GM12878 (cell line): ENCODE measurements at regions of chr14 and their contacts with region 1.

Region 1: DNA sequence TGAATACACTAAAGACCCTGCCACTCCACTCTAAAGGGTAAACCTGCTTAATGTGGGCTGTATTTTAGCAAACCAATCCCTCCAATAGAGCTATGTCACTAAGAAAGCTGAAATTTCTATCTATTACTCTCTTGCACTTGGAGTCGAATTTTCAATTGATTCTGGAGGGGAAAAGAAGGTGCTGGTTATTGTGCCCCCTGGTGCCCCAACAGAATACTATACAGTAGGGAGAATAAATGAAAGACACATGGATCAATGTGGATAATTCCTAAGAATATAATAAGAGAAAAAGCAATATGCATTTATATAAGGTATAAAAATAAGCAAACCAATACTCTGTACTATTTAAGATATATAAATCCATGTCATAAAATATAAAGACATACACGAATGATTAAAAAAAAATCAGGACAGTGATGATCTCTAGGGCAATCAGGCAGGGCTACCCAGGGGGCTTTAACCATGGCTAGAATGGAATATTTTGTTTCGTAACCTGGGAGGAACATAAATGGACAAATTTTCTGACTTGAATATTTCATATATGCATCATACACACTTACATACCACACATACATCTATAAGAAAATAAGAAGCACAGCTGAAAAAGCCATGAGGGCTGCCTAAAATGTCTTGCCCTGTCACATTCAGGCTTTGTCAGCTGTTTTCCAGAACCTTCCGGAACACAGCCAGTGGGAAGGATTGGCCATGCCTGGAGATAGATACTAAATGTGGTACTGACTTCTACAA is 54.4 kb downstream of the EFCAB11 start:
- DNase-seq: no peak
- ATAC-seq: peak; percentile 63
- H3K4me3 ChIP-seq: no peak overlapping the region
- H3K27ac ChIP-seq: no peak overlapping the region
- H3K4me1 ChIP-seq: no peaks in the 10 kb centered on the region
- H3K27me3 ChIP-seq: no peaks in the 10 kb centered on the region
- CTCF ChIP-seq: peak; percentile 44 to 56 (median 45); a peak in 5 of 6 replicates
- EP300 ChIP-seq: no peak
- POLR2A ChIP-seq: no peak
- RAD21 ChIP-seq: peak; percentile 77

Region 2: GRCh38 chr14:89773644-89774316 is 126.3 kb before region 1 on chr14:
- CTCF ChIA-PET with region 1: interaction called, 3 read pairs
- POLR2A ChIA-PET with region 1: no interaction called
- RAD21 ChIA-PET with region 1: no interaction called
- SMC1A ChIA-PET with region 1: interaction called, 3 read pairs
- in situ Hi-C with region 1: no loop called
- intact Hi-C with region 1: loop called (anchors 5 kb)
- DNase-seq: peak; percentile 56
- ATAC-seq: peak; percentile 92
- H3K4me3 ChIP-seq: peak overlapping the region; percentile 34; the same call in 1 of the 2 replicates
- H3K27ac ChIP-seq: peak overlapping the region; percentile 85
- H3K4me1 ChIP-seq: peaks cover 24% of the 10 kb centered on the region
- H3K27me3 ChIP-seq: no peaks in the 10 kb centered on the region
- CTCF ChIP-seq: no peak
- EP300 ChIP-seq: peak in 1 of 2 experiments; percentile 52; a peak in 1 of 4 replicates
- POLR2A ChIP-seq: no peak
- RAD21 ChIP-seq: no peak